Posterior cingulate gyrus (tissue), 11 donors: ENCODE measurements at regions of chr5 and their contacts with region 1.

Region 1: GRCh38 chr5:59390074-59390659 is 503.4 kb downstream of the PDE4D start:
- DNase-seq: no peak

Region 2: DNA sequence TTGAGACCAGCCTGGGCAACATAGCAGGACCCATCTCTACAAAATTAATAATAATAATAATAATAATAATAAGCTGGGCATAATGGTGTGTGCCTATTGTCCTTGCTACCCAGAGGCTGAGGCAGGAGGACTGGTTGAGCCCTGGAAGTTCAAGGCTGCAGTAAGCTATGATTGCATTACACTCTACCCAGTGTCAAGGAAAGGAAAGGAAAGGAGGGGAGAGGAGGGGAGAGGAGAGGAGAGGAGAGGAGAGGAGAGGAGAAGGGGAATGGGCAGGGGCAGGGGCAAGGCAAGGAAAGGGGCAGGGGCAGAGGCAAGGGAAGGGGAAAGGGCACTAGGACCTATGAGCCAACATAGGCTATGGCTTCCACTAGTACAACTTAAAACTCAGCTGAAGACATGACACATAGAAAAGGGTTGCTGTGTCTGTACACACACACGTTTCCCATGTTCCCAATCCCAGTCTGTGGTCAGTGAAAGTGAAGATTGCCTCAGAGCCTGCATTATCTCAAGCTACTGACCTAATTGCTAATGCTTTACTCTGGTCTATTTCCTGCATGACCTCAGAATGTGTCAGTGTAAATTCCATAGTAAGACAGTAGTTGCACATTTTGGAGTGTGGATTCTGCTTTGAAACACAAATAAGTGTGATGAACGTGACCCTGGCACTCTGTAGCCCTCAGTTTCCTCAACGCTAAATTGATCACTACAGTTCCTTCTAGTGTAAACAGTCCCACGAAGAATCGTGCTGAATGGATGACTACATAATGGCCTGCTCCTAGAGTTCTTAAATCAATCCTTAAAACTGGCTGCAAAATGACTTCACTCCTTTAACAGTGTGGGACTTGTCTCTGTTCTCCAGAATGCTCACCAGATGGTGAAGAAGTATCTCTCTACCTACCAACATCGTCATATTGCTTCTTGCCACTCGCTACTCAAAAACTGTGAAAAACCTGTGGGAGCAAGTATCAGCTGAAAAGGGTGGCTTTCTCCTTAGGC is 310.2 kb before region 1 on chr5:
- intact Hi-C with region 1: no loop called
- DNase-seq: no peak

Region 3: DNA sequence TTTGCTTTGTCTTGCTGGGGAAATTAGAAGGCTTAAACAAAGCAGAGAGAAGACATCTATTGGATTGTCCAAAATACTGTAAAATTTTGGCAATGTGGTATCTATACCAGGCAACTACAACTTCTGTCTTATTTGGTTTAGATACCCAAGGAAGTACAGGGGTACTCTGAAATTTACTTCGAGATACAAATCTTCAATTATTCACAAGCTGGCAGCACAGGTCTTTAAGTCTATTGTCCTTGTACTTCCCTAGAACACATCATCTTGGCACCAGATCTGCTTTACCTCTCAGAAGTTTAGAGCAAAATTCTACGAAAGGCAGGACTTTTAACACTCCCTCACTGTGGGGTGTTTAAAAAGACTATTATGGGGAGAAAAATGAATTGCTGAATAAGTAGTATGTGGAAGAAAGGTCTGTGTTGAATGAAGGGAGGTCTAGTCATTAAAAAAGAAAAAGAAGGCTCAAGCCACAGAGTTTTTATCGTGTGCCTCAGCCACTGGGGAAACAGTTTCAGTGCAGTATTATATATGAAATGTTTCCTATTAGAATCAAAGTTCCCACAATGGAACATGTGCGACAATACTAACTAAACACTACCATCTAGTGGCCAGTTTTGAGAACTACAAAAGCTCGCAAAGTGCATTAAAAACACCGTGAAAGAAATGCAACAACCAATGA is 409.6 kb after region 1 on chr5:
- intact Hi-C with region 1: loop called (anchors 1 kb)
- DNase-seq: no peak